SK-N-SH (cell line): ENCODE measurements at regions of chr19 and their contacts with region 1.

Region 1: GRCh38 chr19:47348819-47349795 is at the start of gene DHX34:
- DNase-seq: peak; percentile 100
- H3K4me3 ChIP-seq: peak within 1 kb of the TSS; percentile 75 to 89
- H3K27ac ChIP-seq: peak within 1 kb of the TSS; percentile 42 to 54; a peak in 2 of 4 replicates
- H3K4me1 ChIP-seq: peaks cover 8 to 17% of the 10 kb centered on the region in 2 experiments; a peak in 2 of 4 replicates
- H3K27me3 ChIP-seq: no peaks in the 10 kb centered on the region
- CTCF ChIP-seq: peak; percentile 94
- EP300 ChIP-seq: no peak
- RAD21 ChIP-seq: 0 out of 2 replicates have a peak, but pooled peaks have one; percentile 10
- polyA plus RNA-seq, gene DHX34: 14.8 and 16.4 TPM in 2 replicates

Region 2: DNA sequence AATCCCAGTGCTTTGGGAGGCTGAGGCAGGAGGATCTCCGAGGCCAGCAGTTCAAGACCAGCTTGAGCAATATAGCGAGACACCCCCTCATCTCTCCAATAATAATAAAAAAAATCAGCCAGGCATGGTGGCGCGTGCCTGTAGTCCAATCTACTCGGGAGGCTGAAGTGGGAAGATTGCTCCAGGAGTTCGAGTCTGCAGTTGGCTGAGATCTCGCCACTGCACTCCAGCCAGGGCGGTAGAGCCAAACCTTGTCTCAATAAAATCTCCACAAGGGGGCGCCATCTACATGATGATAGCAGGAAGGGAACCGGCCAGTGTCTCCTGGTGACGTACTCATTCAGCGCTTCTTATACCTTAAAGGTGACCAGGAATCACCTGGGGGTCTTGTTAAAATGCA is 53.1 kb before region 1 on chr19:
- CTCF ChIA-PET with region 1: interaction called, 24 read pairs
- POLR2A ChIA-PET with region 1: no interaction called
- DNase-seq: peak; percentile 78
- H3K4me3 ChIP-seq: peak overlapping the region in 1 of 2 experiments; percentile 23; a peak in 1 of 4 replicates
- H3K27ac ChIP-seq: no peak overlapping the region
- H3K4me1 ChIP-seq: no peaks in the 10 kb centered on the region
- H3K27me3 ChIP-seq: no peaks in the 10 kb centered on the region
- CTCF ChIP-seq: peak; percentile 78
- EP300 ChIP-seq: no peak
- RAD21 ChIP-seq: peak; percentile 91

Region 3: DNA sequence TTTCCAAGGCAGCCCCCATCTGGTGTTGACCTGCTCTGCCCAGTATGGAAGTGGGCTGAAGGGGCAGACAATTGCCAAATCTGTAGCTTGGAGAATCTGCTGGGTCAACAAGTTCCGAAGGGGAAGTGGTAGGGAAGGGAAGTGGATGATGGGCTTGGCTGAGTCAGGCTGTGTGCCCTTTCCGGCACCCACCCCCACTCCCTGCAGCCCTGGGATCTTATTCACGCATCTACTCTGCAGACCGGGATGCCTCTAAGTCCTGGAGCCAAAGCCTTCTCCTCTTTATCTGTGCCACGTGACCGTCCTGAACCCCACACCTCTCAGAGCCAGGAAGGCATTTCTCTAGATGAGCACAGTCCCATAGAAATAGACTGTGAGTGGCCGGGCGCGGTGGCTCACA is 24.6 kb before region 1 on chr19:
- CTCF ChIA-PET with region 1: interaction called, 17 read pairs
- POLR2A ChIA-PET with region 1: no interaction called
- DNase-seq: no peak
- H3K4me3 ChIP-seq: no peak overlapping the region
- H3K27ac ChIP-seq: no peak overlapping the region
- H3K4me1 ChIP-seq: no peaks in the 10 kb centered on the region
- H3K27me3 ChIP-seq: no peaks in the 10 kb centered on the region
- CTCF ChIP-seq: no peak
- EP300 ChIP-seq: no peak
- RAD21 ChIP-seq: no peak

Region 4: DNA sequence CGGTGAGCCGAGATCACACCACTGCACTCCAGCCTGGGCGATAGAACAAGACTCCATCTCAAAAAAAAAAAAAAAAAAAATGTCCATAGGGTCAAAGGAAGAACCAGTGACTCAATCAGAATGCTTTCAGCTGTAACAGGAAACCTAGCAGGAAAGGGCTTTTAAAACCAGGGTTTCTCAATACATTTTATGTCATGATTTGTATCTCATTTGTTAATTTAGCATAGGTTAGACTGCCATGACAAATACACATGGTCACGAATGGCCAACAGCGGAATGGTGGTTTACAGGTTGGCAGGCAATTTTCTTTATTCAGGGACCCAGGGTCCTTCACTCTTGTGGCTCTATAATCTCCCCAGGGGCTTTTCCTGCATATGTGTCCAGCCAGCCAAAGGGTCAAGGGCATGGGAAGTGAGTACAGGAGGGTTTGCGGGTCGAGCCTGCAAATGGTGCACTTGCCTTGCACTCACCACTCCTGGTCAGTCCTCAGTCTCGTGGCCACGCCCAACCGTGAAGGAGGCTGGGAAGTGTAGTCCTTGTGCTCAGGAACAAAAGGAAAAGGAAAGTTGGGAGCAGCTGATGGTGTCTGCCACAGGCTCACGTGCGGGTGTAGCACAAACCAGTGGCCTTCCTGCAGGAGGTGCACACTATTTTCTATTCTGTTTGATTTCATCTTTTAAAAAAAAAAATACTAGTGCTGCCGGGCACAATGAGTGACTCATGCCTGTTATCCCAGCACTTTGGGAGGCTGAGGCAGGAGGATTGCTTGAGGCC is 14.8 kb after region 1 on chr19:
- CTCF ChIA-PET with region 1: interaction called, 21 read pairs
- POLR2A ChIA-PET with region 1: no interaction called
- DNase-seq: peak; percentile 29
- H3K4me3 ChIP-seq: no peak overlapping the region
- H3K27ac ChIP-seq: no peak overlapping the region
- H3K4me1 ChIP-seq: no peaks in the 10 kb centered on the region
- H3K27me3 ChIP-seq: no peaks in the 10 kb centered on the region
- CTCF ChIP-seq: no peak
- EP300 ChIP-seq: no peak
- RAD21 ChIP-seq: no peak

Region 5: DNA sequence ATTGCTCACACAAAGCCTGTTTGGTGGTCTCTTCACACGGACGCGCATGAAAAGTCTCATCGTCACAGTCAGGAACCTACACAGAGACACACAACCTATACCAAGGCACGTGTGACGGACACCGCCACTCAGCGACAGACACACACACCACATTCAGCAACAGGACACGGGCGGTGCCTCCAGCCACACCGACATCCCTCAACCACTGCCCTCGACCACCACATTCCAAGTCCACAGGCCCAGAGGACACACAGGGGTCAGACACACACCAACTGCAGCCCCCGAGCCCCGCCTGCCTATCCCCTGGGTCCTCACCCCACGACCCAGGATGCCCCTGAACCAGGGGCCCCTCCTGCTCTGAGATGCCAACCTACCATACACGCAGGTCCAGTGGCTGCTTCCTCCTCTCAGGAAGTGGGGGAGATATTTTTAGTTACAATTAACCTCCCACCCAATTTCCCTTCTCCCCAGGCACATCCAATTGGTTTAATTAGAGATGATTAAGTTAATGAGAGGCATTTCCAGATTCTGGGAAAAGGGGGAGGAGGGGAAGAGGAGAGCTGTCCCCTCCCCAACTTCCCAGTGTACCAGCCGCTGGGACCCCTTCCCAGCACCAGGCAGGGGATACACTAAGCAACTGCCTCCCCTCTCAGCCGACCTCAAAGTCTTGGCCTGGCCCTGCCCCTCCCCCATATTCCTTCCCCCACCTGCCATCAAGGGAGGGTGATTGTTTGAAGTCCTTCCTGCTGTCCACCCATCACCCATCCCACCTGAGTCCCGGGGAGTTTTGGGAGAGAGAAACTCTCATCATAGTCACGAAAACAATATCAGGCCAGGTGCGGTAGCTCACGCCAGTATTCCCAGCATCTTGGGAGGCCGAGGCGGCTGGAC is 49.8 kb after region 1 on chr19:
- CTCF ChIA-PET with region 1: interaction called, 11 read pairs
- POLR2A ChIA-PET with region 1: interaction called, 3 read pairs
- DNase-seq: no peak
- H3K4me3 ChIP-seq: no peak overlapping the region
- H3K27ac ChIP-seq: no peak overlapping the region
- H3K4me1 ChIP-seq: peaks cover 0 to 7% of the 10 kb centered on the region in 2 experiments; a peak in 1 of 4 replicates
- H3K27me3 ChIP-seq: no peaks in the 10 kb centered on the region
- CTCF ChIP-seq: no peak
- EP300 ChIP-seq: no peak
- RAD21 ChIP-seq: no peak